PC-9 (cell line): ENCODE measurements at regions of chr1 and their contacts with region 1.

Region 1: DNA sequence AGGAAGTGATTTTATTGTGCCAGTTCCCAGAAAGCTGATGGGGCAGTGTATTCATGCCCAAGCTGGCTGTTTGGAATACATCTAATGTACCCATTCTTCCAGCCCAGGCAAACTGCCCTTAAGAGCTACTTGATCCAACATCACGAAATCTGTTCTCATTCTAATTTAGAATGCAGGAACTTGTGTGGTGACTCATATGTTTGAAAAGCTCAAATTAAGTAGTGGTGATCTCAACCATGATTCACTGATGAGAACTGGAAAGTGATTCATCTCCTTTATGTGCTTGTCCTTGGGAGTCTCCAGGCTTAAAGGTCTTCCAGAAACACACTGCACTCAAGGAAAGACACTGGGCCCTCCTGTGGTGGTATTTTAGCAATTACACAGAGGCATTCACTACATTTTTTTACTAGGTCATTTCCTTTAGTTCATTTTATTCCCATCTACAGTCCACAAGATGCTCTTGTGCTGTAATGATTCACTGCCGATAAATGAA is 65.4 kb downstream of the RPE65 start:
- DNase-seq: peak; percentile 63 to 99
- H3K4me3 ChIP-seq: no peak overlapping the region
- H3K27ac ChIP-seq: peak overlapping the region; percentile 79
- H3K4me1 ChIP-seq: peaks cover 25% of the 10 kb centered on the region
- H3K27me3 ChIP-seq: no peaks in the 10 kb centered on the region
- CTCF ChIP-seq: peak; percentile 72

Region 2: DNA sequence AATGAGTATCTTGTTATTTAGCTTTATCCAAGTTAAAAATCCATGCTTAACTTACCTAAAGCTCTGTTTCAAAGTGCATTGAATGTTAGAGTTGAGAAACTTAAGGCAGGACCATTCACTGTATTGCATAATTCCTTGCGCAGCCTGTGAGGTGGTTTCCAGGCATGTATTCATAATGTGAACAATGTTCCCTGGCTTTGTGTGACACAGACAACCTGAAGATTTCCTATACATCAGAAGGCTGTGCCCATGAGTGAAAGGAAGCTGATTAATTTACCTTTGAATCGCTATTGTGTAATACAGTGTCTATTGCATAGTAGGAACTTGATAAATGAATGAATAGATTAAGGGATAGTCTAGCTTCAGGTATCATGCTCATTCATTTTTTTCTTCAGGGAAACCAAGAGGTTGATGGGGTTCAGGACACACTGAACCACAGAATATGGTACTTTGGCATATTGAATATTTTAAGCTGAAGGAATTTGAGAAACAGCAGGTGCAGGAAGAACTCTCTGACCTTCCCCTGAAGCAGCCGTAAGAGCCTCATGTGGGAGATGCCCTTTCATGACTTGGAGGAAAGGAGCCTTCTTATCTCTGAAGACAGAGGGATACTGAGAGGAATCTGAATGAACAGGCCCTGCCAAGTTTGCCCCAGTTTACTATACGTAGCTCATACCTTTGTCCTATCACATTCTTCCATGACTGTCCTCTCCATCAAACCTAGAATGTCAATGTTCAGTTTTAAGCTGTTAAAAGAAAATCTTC is 462.5 kb before region 1 on chr1:
- CTCF ChIA-PET with region 1: no interaction called
- POLR2A ChIA-PET with region 1: no interaction called
- intact Hi-C with region 1: no loop called
- DNase-seq: no peak
- H3K4me3 ChIP-seq: no peak overlapping the region
- H3K27ac ChIP-seq: no peak overlapping the region
- H3K4me1 ChIP-seq: no peaks in the 10 kb centered on the region
- H3K27me3 ChIP-seq: no peaks in the 10 kb centered on the region
- CTCF ChIP-seq: no peak

Region 3: DNA sequence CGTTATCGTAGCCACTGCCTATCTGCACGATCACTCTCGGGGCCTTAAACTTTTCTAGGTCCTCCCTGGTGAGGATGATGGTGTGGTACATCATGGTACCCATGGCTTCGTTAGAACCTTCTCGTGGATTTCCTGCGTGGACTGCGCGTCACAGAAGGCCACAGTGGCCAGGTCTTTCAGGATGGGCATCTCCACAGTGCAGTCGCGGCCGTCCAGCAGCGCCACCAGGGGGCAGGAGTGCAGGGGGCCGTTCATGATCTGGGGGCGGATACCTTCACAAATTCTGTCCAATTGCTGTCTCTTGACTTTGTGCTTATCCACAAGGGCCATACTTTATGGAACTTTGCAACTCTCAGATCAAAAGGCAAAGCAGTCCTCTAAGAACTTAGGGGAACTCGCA is 221.6 kb before region 1 on chr1:
- CTCF ChIA-PET with region 1: no interaction called
- POLR2A ChIA-PET with region 1: no interaction called
- intact Hi-C with region 1: no loop called
- DNase-seq: no peak
- H3K4me3 ChIP-seq: no peak overlapping the region
- H3K27ac ChIP-seq: no peak overlapping the region
- H3K4me1 ChIP-seq: no peaks in the 10 kb centered on the region
- H3K27me3 ChIP-seq: no peaks in the 10 kb centered on the region
- CTCF ChIP-seq: peak; percentile 41; the same call in 1 of the 2 replicates

Region 4: GRCh38 chr1:68401511-68401910 is 17.1 kb after region 1 on chr1:
- CTCF ChIA-PET with region 1: no interaction called
- POLR2A ChIA-PET with region 1: no interaction called
- intact Hi-C with region 1: no loop called
- DNase-seq: no peak
- H3K4me3 ChIP-seq: no peak overlapping the region
- H3K27ac ChIP-seq: no peak overlapping the region
- H3K4me1 ChIP-seq: no peaks in the 10 kb centered on the region
- H3K27me3 ChIP-seq: no peaks in the 10 kb centered on the region
- CTCF ChIP-seq: no peak

Region 5: DNA sequence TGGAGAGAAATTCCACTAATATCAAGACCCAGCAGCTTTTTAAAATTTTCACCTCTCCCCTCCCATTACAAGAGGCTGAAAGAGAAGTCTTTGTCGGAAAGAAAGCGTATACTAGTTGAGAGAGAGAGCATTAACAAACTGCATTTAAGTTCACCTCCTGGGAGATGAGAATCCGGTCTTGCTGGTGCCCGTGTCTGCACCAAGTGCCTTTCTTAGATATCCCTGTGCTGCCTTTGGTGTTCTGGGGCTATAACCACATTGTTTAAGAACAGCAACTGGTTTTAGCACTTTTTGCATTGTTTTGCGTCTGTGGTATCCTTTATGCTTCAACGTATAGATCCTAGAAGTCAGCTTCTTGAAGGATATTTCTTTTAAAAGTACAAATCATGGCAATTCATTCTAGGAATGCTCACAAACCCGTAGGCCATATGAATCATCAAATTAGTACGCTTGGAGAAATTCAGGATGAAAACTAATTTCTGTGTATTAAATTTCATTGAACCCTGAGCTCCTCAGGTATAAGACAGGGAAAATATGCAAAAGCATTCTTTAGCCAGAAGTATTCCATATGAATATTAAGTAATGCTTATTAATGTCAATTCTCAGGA is 68.8 kb after region 1 on chr1:
- CTCF ChIA-PET with region 1: no interaction called
- POLR2A ChIA-PET with region 1: no interaction called
- intact Hi-C with region 1: loop called (anchors 2 kb)
- DNase-seq: peak; percentile 44 to 86
- H3K4me3 ChIP-seq: peak overlapping the region; percentile 44; the same call in 1 of the 2 replicates
- H3K27ac ChIP-seq: peak overlapping the region; percentile 65
- H3K4me1 ChIP-seq: peaks cover 20% of the 10 kb centered on the region
- H3K27me3 ChIP-seq: no peaks in the 10 kb centered on the region
- CTCF ChIP-seq: no peak

Region 6: DNA sequence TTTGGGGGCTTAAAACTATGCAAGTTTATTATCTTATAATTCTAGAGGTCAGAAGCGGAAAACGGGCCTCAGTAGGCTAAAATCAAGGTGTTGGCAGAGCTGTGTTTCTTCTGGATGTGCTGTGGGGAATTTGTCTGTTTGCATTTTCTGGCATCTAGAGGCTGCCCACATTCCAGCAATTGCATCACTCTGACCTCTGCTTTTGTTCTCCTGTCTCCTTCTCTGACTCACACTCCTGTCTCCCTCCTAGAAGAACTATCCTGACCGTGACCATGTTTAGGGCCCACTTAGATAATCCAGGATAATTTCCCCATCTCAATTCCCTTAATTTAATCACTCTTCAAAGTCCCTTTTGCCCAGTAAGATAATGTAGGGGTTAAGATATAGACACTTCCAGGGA is 239.9 kb after region 1 on chr1:
- CTCF ChIA-PET with region 1: no interaction called
- POLR2A ChIA-PET with region 1: no interaction called
- intact Hi-C with region 1: no loop called
- DNase-seq: peak in 1 of 2 experiments; percentile 29
- H3K4me3 ChIP-seq: no peak overlapping the region
- H3K27ac ChIP-seq: no peak overlapping the region
- H3K4me1 ChIP-seq: no peaks in the 10 kb centered on the region
- H3K27me3 ChIP-seq: no peaks in the 10 kb centered on the region
- CTCF ChIP-seq: no peak